OCI-LY7 (cell line): ENCODE measurements at regions of chr17 and their contacts with region 1.

Region 1: GRCh38 chr17:1592751-1593629 is 30.4 kb upstream of the PITPNA start:
- DNase-seq: peak; percentile 94
- H3K4me3 ChIP-seq: peak overlapping the region; percentile 56
- H3K27ac ChIP-seq: peak overlapping the region; percentile 78
- H3K4me1 ChIP-seq: peaks cover 30% of the 10 kb centered on the region
- CTCF ChIP-seq: no peak

Region 2: DNA sequence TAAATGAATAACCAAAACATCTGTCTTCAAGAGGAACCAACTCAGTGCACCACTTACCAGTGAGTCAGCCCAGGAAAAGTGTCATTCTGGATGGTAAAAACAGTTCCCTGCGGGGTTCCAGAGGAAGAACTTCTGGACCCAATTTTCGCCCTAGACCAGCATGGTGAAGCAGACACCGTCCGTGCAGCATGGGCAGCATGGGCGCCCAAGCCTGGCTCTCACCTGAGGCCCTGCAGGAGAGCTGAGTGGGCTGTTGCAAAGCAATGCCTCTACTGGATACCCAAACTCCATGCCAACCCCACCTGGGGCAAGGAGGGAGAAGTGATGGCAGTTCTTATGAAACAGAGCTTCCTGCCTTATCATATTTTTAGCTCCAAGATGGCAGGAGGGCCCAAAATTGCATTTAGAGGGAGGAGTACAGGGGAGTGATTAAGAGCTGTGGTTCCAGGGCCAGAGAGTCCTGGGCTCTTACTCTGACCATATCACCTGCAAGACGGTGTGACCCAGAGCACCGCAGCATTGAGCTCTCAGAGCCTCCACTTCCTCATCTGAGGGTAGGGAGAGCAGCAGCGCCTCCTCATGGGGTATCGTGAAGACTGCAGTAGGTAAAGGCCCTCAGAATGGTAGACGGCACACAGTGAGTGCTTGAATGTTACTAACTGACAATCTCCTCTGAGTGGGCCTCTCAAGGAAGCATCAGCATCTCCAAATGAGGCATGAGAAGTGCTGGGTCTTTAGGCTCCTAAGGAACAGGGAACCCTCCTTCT is 60.0 kb before region 1 on chr17:
- CTCF ChIA-PET with region 1: no interaction called
- POLR2A ChIA-PET with region 1: no interaction called
- intact Hi-C with region 1: no loop called
- DNase-seq: peak; percentile 58
- H3K4me3 ChIP-seq: no peak overlapping the region
- H3K27ac ChIP-seq: no peak overlapping the region
- H3K4me1 ChIP-seq: peaks cover 10% of the 10 kb centered on the region
- CTCF ChIP-seq: peak; percentile 76

Region 3: DNA sequence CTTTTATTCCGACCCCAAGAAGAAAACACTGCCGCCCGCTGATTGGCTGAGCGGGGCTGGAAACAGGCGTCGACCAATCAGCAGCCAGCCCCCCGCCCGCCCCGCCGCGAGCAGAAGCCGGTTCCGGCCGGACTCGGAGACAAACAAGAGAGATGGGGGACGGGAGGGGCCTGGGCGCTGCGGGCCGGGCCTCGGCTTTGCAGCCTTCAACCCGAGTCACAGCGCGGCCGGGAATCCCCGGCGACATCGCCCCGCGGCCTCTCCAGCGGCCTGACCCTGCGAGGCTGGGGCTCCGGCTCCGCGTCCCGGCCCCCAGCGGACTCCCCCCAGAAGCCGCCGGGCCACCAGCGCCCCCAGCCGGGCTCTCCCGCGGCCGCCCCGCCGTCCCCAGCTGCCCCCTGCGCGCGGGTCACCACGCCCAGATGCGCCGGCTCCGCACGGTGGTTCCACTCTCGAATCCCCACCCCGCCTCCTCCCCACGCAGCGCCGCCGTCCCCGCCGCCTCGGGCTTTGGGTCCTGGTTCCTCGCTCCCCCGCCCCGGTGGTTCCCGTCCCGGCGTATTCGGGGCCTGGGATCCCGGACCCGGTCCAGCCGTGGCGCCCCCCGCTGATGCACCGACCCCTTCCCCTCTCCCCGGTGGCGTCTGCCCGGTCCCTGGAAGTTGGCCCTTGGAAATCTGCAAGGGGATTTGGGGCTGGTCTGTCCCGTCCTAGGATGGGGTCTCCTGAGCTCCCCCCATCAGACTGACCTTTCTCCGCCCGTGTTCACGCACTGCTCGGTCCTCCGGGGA is 36.1 kb after region 1 on chr17:
- CTCF ChIA-PET with region 1: interaction called, 15 read pairs
- POLR2A ChIA-PET with region 1: interaction called, 4 read pairs
- intact Hi-C with region 1: loop called (anchors 1 kb)
- DNase-seq: peak; percentile 96
- H3K4me3 ChIP-seq: peak overlapping the region; percentile 80
- H3K27ac ChIP-seq: peak overlapping the region; percentile 79
- H3K4me1 ChIP-seq: peaks cover 58% of the 10 kb centered on the region
- CTCF ChIP-seq: peak; percentile 74